ENCODE measurements at regions of chr12 and their contacts with region 1.

Region 1: GRCh38 chr12:52879394-52880351 is 25.2 kb downstream of the KRT8 start:
- DNase-seq: peak; percentile 78
- ATAC-seq: peak; percentile 94
- H3K4me3 Mint-ChIP-seq: no peak overlapping the region
- H3K27ac Mint-ChIP-seq: no peak overlapping the region
- H3K4me1 Mint-ChIP-seq: peaks cover 4% of the 10 kb centered on the region
- H3K27me3 Mint-ChIP-seq: peaks cover 12% of the 10 kb centered on the region

Region 2: DNA sequence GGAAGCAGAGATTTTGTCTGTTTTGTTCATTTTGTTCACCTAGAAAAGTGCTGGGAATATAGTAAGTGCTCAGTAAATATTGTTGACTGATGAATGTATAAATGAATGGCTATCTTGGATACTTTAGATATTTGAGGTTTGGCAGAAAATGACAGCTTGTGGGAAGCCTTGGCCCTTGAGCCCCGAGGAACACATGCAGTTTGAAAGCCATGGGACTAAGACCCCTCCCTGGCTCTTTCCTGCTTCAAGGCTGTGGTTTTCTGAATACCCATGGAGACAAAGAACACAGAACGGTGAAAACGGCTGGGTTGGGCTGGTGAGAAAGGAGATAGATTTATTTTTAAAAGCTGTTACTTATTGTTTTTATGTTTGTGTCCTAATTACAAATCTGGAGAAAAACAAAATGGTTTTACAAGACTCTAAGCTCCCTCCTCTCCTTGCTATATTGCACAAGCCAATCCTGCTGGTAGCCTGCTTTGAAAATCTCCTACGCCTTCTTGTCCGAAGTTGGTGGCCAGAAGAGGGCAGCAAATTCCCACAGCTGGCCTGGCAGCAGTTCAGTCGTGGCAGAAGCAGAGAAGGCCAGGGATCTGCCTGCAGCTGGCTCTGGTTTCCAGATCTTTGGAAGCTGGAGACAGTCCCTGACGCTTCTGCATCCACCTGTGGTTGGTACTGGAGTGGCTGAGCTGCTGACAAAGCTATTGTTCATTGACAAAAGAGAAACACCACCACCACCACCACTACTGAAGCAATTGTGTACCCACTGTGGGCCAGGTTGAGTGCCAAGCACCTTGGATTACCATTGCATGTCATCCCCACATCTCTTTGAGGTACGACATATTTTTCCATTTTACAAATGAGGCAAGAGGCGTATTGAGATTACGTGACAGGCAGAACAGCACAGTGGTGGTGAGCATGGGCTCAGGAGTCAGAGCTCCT is 507.2 kb before region 1 on chr12:
- CTCF ChIA-PET with region 1: interaction called, 58 read pairs
- DNase-seq: peak; percentile 73
- ATAC-seq: peak; percentile 58
- H3K4me3 Mint-ChIP-seq: no peak overlapping the region
- H3K27ac Mint-ChIP-seq: no peak overlapping the region
- H3K4me1 Mint-ChIP-seq: no peaks in the 10 kb centered on the region
- H3K27me3 Mint-ChIP-seq: peaks cover 36% of the 10 kb centered on the region

Region 3: GRCh38 chr12:52582971-52583456 is 296.7 kb before region 1 on chr12:
- CTCF ChIA-PET with region 1: interaction called, 459 read pairs
- DNase-seq: peak; percentile 63
- ATAC-seq: peak; percentile 58
- H3K4me3 Mint-ChIP-seq: no peak overlapping the region
- H3K27ac Mint-ChIP-seq: no peak overlapping the region
- H3K4me1 Mint-ChIP-seq: peaks cover 14% of the 10 kb centered on the region
- H3K27me3 Mint-ChIP-seq: no peaks in the 10 kb centered on the region

Region 4: GRCh38 chr12:52980693-52981423 is 101.2 kb after region 1 on chr12:
- CTCF ChIA-PET with region 1: interaction called, 367 read pairs
- DNase-seq: peak; percentile 90
- ATAC-seq: peak; percentile 92
- H3K4me3 Mint-ChIP-seq: no peak overlapping the region
- H3K27ac Mint-ChIP-seq: no peak overlapping the region
- H3K4me1 Mint-ChIP-seq: no peaks in the 10 kb centered on the region
- H3K27me3 Mint-ChIP-seq: peaks cover 33% of the 10 kb centered on the region

Region 5: DNA sequence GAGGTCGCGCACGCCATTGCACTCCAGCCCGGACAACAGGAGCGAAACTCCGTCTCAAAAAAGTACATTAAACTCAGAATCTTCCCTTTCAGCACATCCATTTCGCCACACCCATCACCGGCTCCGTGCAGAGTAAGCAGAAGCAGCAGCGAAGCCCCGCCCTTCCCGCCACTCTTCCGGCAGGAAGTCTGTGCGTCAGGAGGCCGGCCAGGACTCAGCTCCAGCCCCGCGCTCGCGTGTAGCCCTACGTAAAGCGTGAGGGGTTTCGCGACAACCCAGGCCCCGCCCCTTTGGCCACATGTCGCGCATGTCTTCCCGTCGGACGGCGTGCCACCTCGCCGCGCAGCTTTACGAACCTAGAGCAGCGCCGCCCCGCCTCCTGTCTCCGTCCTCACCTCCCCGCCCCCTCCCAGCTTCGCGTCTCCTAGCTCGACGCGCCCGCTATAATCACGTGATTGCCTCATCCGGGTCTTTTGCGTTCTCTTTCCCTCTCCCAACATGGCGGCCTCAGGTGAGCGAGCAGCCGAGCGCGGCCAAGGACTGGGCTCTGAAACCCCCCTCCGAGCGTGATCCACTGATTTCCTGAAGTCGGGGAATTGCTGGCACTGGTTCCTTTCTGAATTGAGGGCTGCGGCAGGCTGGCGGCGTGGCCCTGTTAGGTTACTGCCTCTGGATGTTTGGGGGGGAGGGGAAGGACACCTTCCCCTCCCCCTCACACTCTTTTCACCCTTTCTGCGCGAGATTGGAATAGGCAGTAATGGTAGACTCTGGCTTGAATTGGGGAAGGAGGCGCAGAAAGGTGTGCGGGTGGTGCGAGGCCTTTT is 126.5 kb after region 1 on chr12 and contains the start of gene EIF4B:
- CTCF ChIA-PET with region 1: interaction called, 11 read pairs
- DNase-seq: peak; percentile 100
- ATAC-seq: peak; percentile 96
- H3K4me3 Mint-ChIP-seq: peak within 1 kb of the TSS; percentile 83
- H3K27ac Mint-ChIP-seq: peak within 1 kb of the TSS; percentile 95
- H3K4me1 Mint-ChIP-seq: peaks cover 46% of the 10 kb centered on the region
- H3K27me3 Mint-ChIP-seq: no peaks in the 10 kb centered on the region
- total RNA-seq, gene EIF4B: 264 to 382 TPM